Breast epithelium (tissue), 4 donors: ENCODE measurements at regions of chr1 and their contacts with region 1.

Region 1: DNA sequence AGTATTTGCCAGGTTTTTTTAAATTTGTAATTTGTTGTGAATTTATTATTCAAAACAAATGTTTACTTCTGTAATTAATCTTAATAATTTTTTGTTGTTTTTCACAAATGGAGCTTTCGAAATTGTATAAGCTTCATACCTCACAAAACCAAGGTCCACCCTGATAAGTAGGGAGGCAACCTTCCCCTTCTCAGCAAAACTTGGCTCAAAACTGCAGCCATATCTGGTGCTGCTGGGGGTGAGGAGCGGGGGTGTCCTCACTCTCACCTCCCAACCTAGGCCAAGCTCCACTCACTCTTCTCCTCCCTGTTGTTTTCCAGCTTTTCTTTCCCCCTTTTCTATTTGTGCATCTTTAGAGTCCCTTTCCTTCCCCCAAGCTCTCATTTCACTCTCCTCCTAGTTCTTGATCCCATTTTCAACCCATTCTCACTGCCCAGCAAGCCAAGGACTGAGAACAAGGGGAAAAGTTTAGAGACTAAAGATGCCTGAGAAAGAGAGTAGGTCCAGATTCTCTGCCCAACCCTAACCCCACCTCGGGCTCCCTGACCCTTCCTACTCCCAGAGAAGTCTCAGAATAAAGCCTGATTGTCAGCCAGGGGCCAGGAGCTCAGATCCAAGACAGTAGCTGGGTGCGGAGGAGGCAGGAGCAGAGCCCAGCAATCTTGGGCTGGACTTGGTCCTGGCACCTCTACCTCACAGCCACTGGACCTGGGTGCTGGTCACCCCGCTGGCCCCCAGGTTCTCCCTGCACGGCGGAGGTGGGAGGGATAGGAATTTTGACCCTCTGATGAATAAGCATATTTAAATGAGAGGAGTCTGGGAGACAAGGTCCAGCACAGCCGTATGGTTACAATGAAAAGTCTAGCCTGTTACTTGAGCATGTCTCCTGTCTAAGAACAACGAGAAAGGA is 8.3 kb upstream of the CFAP45 start:
- DNase-seq: no peak
- H3K4me3 ChIP-seq: no peak overlapping the region
- H3K27ac ChIP-seq: no peak overlapping the region
- H3K4me1 ChIP-seq: no peaks in the 10 kb centered on the region
- H3K27me3 ChIP-seq: no peaks in the 10 kb centered on the region
- CTCF ChIP-seq: no peak
- POLR2A ChIP-seq: no peak

Region 2: GRCh38 chr1:159302095-159302494 is 606.2 kb before region 1 on chr1 and contains the start of gene FCER1A:
- intact Hi-C with region 1: loop called (anchors 5 kb)
- DNase-seq: no peak
- H3K4me3 ChIP-seq: no peak within 1 kb of the TSS
- H3K27ac ChIP-seq: no peak within 1 kb of the TSS
- H3K4me1 ChIP-seq: no peaks in the 10 kb centered on the region
- H3K27me3 ChIP-seq: no peaks in the 10 kb centered on the region
- CTCF ChIP-seq: no peak
- POLR2A ChIP-seq: no peak
- total RNA-seq, gene FCER1A: 0.66 to 5.1 (median 2.0) TPM